CD8-positive, alpha-beta T cell (primary cell): ENCODE measurements at regions of chr9 and their contacts with region 1.

Region 1: DNA sequence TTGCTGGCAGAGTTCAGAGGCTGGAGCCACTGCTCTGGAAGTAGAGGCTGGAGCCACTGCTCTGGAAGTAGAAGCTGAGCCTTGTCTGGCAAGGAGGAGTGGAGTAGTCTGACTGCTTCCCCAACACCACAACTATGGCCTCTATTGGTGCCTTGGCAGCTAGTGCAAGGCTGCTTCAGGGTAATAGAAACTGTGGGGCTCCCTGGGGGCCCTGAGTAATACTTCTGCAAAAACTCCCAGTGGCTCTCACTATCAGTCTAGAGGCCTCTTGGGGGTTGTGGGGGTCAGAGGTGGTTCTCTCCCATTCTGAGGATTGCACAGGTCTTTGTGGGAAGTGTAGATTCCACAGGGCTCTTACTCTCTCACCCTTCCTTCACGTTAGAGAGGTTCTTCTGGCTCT is 629.0 kb upstream of the PTPRD start:
- DNase-seq: no peak
- ATAC-seq: no peak
- H3K4me3 ChIP-seq: no peak overlapping the region
- H3K4me3 Mint-ChIP-seq: no peak overlapping the region
- H3K27ac ChIP-seq: no peak overlapping the region
- H3K27ac Mint-ChIP-seq: no peak overlapping the region
- H3K4me1 ChIP-seq: no peaks in the 10 kb centered on the region
- H3K4me1 Mint-ChIP-seq: no peaks in the 10 kb centered on the region
- H3K27me3 ChIP-seq: no peaks in the 10 kb centered on the region
- H3K27me3 Mint-ChIP-seq: no peaks in the 10 kb centered on the region
- CTCF ChIP-seq: no peak

Region 2: DNA sequence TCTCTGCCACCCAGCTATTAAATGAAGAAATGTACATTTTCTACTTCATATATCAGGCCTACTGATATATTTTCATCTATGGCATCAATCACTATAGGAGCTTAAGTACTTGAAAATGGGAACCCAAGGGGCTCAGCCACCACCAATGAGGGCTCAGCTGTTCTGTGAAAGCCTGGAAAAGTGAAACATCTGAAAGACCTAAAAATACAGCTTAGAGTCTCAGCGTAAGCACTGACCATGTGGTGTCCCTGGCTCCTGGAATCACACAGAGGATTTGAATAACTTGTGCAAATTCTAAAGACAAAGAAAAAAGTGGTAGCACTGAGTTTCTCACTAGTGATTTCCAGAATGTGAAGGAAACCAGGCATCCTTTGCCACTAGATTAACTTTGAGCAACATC is 693.4 kb before region 1 on chr9:
- CTCF ChIA-PET with region 1: no interaction called
- POLR2A ChIA-PET with region 1: no interaction called
- intact Hi-C with region 1: no loop called
- DNase-seq: no peak
- ATAC-seq: no peak
- H3K4me3 ChIP-seq: no peak overlapping the region
- H3K4me3 Mint-ChIP-seq: no peak overlapping the region
- H3K27ac ChIP-seq: no peak overlapping the region
- H3K27ac Mint-ChIP-seq: no peak overlapping the region
- H3K4me1 ChIP-seq: no peaks in the 10 kb centered on the region
- H3K4me1 Mint-ChIP-seq: no peaks in the 10 kb centered on the region
- H3K27me3 ChIP-seq: no peaks in the 10 kb centered on the region
- H3K27me3 Mint-ChIP-seq: no peaks in the 10 kb centered on the region
- CTCF ChIP-seq: no peak

Region 3: DNA sequence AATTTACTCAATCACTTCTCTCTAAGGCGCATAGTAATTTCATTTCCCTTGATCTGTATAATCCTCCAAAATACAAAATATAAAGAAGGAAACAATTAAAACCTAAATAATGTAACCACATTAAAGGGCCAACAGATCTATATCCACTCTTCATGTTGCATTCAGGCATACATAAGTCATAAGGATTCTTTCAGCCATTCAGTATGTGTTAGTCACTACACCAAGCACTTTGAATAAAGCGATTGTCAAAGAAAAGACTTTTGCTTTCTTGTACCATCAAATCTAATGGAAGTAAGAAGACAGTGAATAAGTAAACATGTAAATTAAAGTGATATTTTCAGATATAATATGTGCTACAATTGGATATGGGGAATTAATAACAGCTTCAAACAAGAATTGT is 59.8 kb before region 1 on chr9:
- CTCF ChIA-PET with region 1: no interaction called
- POLR2A ChIA-PET with region 1: no interaction called
- intact Hi-C with region 1: loop called in 1 of 2 experiments (anchors 10 kb)
- DNase-seq: no peak
- ATAC-seq: no peak
- H3K4me3 ChIP-seq: no peak overlapping the region
- H3K4me3 Mint-ChIP-seq: no peak overlapping the region
- H3K27ac ChIP-seq: no peak overlapping the region
- H3K27ac Mint-ChIP-seq: no peak overlapping the region
- H3K4me1 ChIP-seq: no peaks in the 10 kb centered on the region
- H3K4me1 Mint-ChIP-seq: no peaks in the 10 kb centered on the region
- H3K27me3 ChIP-seq: no peaks in the 10 kb centered on the region
- H3K27me3 Mint-ChIP-seq: no peaks in the 10 kb centered on the region
- CTCF ChIP-seq: no peak

Region 4: DNA sequence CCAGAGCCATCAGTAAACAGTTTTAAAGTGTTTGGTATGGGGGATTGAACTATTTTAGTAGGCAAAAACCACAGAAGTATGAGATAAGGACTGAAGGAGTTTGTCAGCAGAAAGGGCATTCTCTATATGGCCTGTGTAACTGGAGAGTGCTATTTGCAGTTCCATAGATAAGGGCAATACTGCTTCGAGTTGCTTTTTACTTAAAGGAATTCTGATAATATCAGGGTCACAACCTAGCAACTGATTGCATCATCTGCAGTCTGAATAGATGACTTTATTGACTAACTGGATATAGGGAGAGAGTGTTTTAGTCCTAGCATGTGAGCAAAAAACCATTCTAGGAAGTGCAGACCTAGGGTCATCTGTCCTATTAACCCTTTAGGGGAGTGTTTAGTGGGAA is 16.2 kb after region 1 on chr9:
- CTCF ChIA-PET with region 1: no interaction called
- POLR2A ChIA-PET with region 1: no interaction called
- intact Hi-C with region 1: no loop called
- DNase-seq: no peak
- ATAC-seq: no peak
- H3K4me3 ChIP-seq: no peak overlapping the region
- H3K4me3 Mint-ChIP-seq: no peak overlapping the region
- H3K27ac ChIP-seq: no peak overlapping the region
- H3K27ac Mint-ChIP-seq: no peak overlapping the region
- H3K4me1 ChIP-seq: no peaks in the 10 kb centered on the region
- H3K4me1 Mint-ChIP-seq: no peaks in the 10 kb centered on the region
- H3K27me3 ChIP-seq: no peaks in the 10 kb centered on the region
- H3K27me3 Mint-ChIP-seq: no peaks in the 10 kb centered on the region
- CTCF ChIP-seq: no peak